Uterus (tissue), 4 donors: ENCODE measurements at regions of chr20 and their contacts with region 1.

Region 1: GRCh38 chr20:22684072-22684762 is 99.8 kb upstream of the FOXA2 start:
- DNase-seq: peak; percentile 32 to 59
- H3K4me3 ChIP-seq: no peak overlapping the region
- H3K27ac ChIP-seq: no peak overlapping the region
- H3K4me1 ChIP-seq: no peaks in the 10 kb centered on the region
- H3K27me3 ChIP-seq: no peaks in the 10 kb centered on the region
- CTCF ChIP-seq: peak; percentile 64 to 74 (median 68)
- POLR2A ChIP-seq: no peak

Region 2: GRCh38 chr20:22333885-22334545 is 350.2 kb before region 1 on chr20:
- intact Hi-C with region 1: loop called (anchors 10 kb)
- DNase-seq: peak in 1 of 2 donors; percentile 28
- H3K4me3 ChIP-seq: no peak overlapping the region
- H3K27ac ChIP-seq: no peak overlapping the region
- H3K4me1 ChIP-seq: no peaks in the 10 kb centered on the region
- H3K27me3 ChIP-seq: no peaks in the 10 kb centered on the region
- CTCF ChIP-seq: peak; percentile 41 to 57 (median 48)
- POLR2A ChIP-seq: no peak